CD4-positive, alpha-beta T cell (primary cell): ENCODE measurements at regions of chr11 and their contacts with region 1.

Region 1: DNA sequence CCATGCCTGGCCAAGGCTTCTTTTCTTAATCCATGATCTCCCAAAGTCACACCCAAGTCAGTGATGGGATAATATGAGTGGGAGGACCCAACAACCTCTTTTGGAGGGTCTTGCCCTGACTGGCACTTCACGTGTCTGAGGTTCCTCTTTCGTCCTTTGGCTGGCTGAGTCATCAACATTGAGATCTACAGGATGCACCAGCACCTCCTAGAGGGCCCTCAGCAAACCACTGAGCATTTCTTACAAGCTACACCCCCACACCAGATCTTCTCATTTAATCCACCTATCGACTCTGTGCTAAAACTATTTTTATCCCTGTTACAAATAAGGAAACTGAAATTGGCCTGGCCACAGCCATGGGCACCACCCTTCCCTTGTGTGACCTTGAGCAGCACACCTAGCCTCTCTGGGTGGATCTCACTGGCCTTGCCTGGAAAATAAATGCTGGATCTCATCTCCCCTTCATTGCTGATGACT is 63.4 kb downstream of the FLI1 start:
- DNase-seq: peak; percentile 40 to 90 (median 60)
- ATAC-seq: peak; percentile 99
- H3K4me3 ChIP-seq: no peak overlapping the region
- H3K4me3 Mint-ChIP-seq: peak overlapping the region; percentile 7
- H3K27ac ChIP-seq: no peak overlapping the region
- H3K27ac Mint-ChIP-seq: peak overlapping the region; percentile 63
- H3K4me1 ChIP-seq: peaks cover 80% of the 10 kb centered on the region
- H3K4me1 Mint-ChIP-seq: peaks cover 93% of the 10 kb centered on the region
- H3K27me3 ChIP-seq: no peaks in the 10 kb centered on the region
- H3K27me3 Mint-ChIP-seq: no peaks in the 10 kb centered on the region
- CTCF ChIP-seq: peak; percentile 74

Region 2: DNA sequence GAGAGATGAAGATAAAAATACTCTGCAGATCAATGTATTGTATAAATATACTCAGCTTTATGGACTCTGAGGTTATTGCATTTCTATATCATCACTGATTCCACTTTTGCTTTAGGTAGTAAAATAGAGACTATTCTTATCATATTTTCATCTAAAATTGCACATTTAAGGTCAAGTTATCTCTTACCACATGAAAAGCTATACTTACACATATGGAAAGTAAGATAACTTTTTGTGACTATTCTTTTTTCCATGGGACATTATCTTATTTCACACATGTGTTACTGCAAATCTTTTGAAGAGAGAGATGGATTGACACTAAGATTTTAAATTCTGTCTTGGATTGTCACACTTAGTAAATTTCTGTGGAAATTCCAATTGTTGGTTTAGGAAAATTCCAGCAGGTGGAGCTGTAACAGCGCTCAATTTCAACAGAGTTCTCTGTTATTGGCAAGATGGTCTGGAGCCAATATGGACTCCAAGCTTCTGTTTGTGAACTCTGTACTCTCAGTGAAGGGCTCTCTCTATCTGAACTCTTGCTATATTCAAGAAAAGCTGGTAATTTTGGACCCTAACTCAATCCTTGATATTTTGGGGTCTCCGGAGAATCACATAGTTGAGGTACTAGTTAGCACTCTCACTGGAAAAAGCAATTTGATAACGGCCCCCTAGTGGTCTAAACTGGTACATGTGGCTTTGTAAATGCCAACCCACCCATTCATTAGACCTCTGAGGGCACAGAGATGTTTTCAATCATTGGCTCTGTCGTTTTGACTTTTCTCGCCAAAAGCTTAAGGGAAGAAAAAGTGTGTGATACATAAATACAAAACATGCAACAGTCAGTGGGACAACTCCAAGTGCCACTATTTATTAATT is 599.6 kb before region 1 on chr11:
- CTCF ChIA-PET with region 1: interaction called, 10 read pairs
- POLR2A ChIA-PET with region 1: no interaction called
- intact Hi-C with region 1: no loop called
- DNase-seq: peak in 13 of 14 experiments; percentile 9 to 84 (median 41)
- ATAC-seq: peak; percentile 94
- H3K4me3 ChIP-seq: peak overlapping the region; percentile 37
- H3K4me3 Mint-ChIP-seq: peak overlapping the region; percentile 87
- H3K27ac ChIP-seq: no peak overlapping the region
- H3K27ac Mint-ChIP-seq: peak overlapping the region; percentile 24
- H3K4me1 ChIP-seq: no peaks in the 10 kb centered on the region
- H3K4me1 Mint-ChIP-seq: peaks cover 8% of the 10 kb centered on the region
- H3K27me3 ChIP-seq: no peaks in the 10 kb centered on the region
- H3K27me3 Mint-ChIP-seq: no peaks in the 10 kb centered on the region
- CTCF ChIP-seq: peak; percentile 100

Region 3: DNA sequence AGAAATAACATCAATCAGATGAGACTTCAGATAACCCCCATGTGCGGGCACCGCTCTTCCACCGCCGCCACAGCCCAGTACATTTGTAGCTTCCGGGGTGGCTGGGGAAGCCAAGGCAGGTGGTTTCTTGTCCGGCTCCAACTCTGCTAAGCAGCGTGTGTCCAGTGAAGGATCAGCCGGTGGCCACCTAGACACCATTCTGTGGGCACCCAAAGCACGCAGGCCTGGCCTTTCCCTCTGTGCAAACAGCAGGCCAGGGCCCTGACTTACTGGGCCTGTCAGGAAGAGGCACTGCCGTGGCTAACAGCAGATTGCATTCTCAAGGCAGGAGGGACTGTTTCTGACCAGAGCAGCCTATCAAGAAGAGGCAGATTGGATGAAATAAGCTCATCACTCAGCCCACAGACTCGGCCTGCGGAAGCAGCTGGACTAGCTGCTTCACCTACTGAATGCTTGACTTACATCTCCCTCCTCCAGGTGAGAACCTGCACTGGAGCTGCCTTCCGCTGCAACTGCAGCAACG is 244.7 kb before region 1 on chr11:
- CTCF ChIA-PET with region 1: interaction called, 10 read pairs
- POLR2A ChIA-PET with region 1: interaction called, 3 read pairs
- intact Hi-C with region 1: loop called (anchors 10 kb)
- DNase-seq: peak in 5 of 14 experiments; percentile 42 to 61 (median 59)
- ATAC-seq: peak; percentile 7
- H3K4me3 ChIP-seq: peak overlapping the region; percentile 89
- H3K4me3 Mint-ChIP-seq: peak overlapping the region; percentile 93
- H3K27ac ChIP-seq: peak overlapping the region; percentile 43 to 93
- H3K27ac Mint-ChIP-seq: peak overlapping the region; percentile 99
- H3K4me1 ChIP-seq: peaks cover 55% of the 10 kb centered on the region
- H3K4me1 Mint-ChIP-seq: peaks cover 92% of the 10 kb centered on the region
- H3K27me3 ChIP-seq: no peaks in the 10 kb centered on the region
- H3K27me3 Mint-ChIP-seq: no peaks in the 10 kb centered on the region
- CTCF ChIP-seq: no peak

Region 4: GRCh38 chr11:128695539-128696221 is 61.6 kb before region 1 on chr11:
- CTCF ChIA-PET with region 1: interaction called, 4 read pairs
- POLR2A ChIA-PET with region 1: interaction called, 6 read pairs
- intact Hi-C with region 1: loop called in 1 of 2 experiments (anchors 2 kb)
- DNase-seq: peak in 5 of 14 experiments; percentile 33 to 84 (median 73)
- ATAC-seq: peak; percentile 54
- H3K4me3 ChIP-seq: peak overlapping the region; percentile 69
- H3K4me3 Mint-ChIP-seq: peak overlapping the region; percentile 92
- H3K27ac ChIP-seq: peak overlapping the region; percentile 60 to 89
- H3K27ac Mint-ChIP-seq: peak overlapping the region; percentile 90
- H3K4me1 ChIP-seq: peaks cover 70% of the 10 kb centered on the region
- H3K4me1 Mint-ChIP-seq: peaks cover 78% of the 10 kb centered on the region
- H3K27me3 ChIP-seq: peaks cover 0 to under 1% of the 10 kb centered on the region in 2 experiments
- H3K27me3 Mint-ChIP-seq: peaks cover 16% of the 10 kb centered on the region
- CTCF ChIP-seq: no peak

Region 5: GRCh38 chr11:128725630-128726319 is 31.5 kb before region 1 on chr11:
- CTCF ChIA-PET with region 1: interaction called, 16 read pairs
- POLR2A ChIA-PET with region 1: interaction called, 4 read pairs
- intact Hi-C with region 1: no loop called
- DNase-seq: peak in 12 of 14 experiments; percentile 27 to 92 (median 50)
- ATAC-seq: peak; percentile 61
- H3K4me3 ChIP-seq: peak overlapping the region; percentile 33
- H3K4me3 Mint-ChIP-seq: peak overlapping the region; percentile 80
- H3K27ac ChIP-seq: peak overlapping the region; percentile 4 to 63
- H3K27ac Mint-ChIP-seq: peak overlapping the region; percentile 90
- H3K4me1 ChIP-seq: peaks cover 100% of the 10 kb centered on the region
- H3K4me1 Mint-ChIP-seq: peaks cover 99% of the 10 kb centered on the region
- H3K27me3 ChIP-seq: no peaks in the 10 kb centered on the region
- H3K27me3 Mint-ChIP-seq: peaks cover 5% of the 10 kb centered on the region
- CTCF ChIP-seq: no peak

Region 6: GRCh38 chr11:128738942-128739341 is 18.3 kb before region 1 on chr11:
- CTCF ChIA-PET with region 1: interaction called, 15 read pairs
- POLR2A ChIA-PET with region 1: interaction called, 10 read pairs
- intact Hi-C with region 1: loop called in 1 of 2 experiments (anchors 2 kb)
- DNase-seq: peak in 8 of 14 experiments; percentile 11 to 64 (median 40)
- ATAC-seq: peak; percentile 62
- H3K4me3 ChIP-seq: peak overlapping the region; percentile 24
- H3K4me3 Mint-ChIP-seq: peak overlapping the region; percentile 81
- H3K27ac ChIP-seq: peak overlapping the region in 1 of 2 donors; percentile 46
- H3K27ac Mint-ChIP-seq: peak overlapping the region; percentile 92
- H3K4me1 ChIP-seq: peaks cover 93% of the 10 kb centered on the region
- H3K4me1 Mint-ChIP-seq: peaks cover 92% of the 10 kb centered on the region
- H3K27me3 ChIP-seq: no peaks in the 10 kb centered on the region
- H3K27me3 Mint-ChIP-seq: no peaks in the 10 kb centered on the region
- CTCF ChIP-seq: no peak

Region 7: GRCh38 chr11:128862913-128863660 is 105.8 kb after region 1 on chr11:
- CTCF ChIA-PET with region 1: no interaction called
- POLR2A ChIA-PET with region 1: no interaction called
- intact Hi-C with region 1: no loop called
- DNase-seq: no peak
- ATAC-seq: no peak
- H3K4me3 ChIP-seq: no peak overlapping the region
- H3K4me3 Mint-ChIP-seq: no peak overlapping the region
- H3K27ac ChIP-seq: no peak overlapping the region
- H3K27ac Mint-ChIP-seq: no peak overlapping the region
- H3K4me1 ChIP-seq: peaks cover 9% of the 10 kb centered on the region
- H3K4me1 Mint-ChIP-seq: peaks cover 9% of the 10 kb centered on the region
- H3K27me3 ChIP-seq: no peaks in the 10 kb centered on the region
- H3K27me3 Mint-ChIP-seq: no peaks in the 10 kb centered on the region
- CTCF ChIP-seq: no peak